Activated naive CD8-positive, alpha-beta T cell treated with anti-CD3 and anti-CD28 coated beads, Interleukin-2, amount 10 ng/mL, durations not matched to agents 7 days and 5 days (primary cell): ENCODE measurements at regions of chr4 and their contacts with region 1.

Region 1: DNA sequence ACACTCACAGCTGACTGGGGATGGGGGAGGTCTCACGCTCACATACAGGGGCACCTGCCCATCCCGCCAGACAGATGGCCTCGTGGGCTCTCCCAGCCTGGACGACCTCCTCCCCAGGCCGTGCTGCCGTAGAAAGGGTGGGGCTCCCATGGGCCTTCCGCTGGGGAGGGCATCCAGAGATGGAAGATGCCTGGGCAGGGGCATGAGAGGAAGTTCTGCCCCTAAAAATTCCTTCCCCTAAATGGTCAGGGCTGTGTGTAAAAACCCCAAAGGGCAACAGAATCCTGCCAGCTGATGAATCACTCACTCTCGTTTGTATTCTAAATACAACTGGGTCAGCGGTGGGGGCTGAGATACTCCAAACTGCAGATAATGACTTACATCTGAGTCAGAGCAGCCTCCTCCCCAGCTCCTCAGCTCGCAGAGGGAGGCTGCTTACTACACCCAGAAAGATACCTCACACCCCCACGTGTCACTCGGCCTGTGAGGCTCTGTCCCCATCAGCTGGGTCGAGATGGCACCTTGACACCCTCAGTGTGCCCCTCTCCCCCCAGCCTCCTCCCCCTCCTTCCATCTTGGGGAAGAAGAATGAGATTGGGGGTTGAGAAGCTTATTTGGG is 10.1 kb downstream of the WDR1 start:
- DNase-seq: no peak
- ATAC-seq: peak; percentile 69
- H3K4me3 Mint-ChIP-seq: peak overlapping the region; percentile 51
- H3K27ac Mint-ChIP-seq: peak overlapping the region; percentile 79
- H3K4me1 Mint-ChIP-seq: peaks cover 90% of the 10 kb centered on the region
- H3K27me3 Mint-ChIP-seq: no peaks in the 10 kb centered on the region

Region 2: GRCh38 chr4:10077483-10078335 is 28.8 kb before region 1 on chr4:
- POLR2A ChIA-PET with region 1: no interaction called
- DNase-seq: peak; percentile 26
- ATAC-seq: no peak
- H3K4me3 Mint-ChIP-seq: no peak overlapping the region
- H3K27ac Mint-ChIP-seq: no peak overlapping the region
- H3K4me1 Mint-ChIP-seq: no peaks in the 10 kb centered on the region
- H3K27me3 Mint-ChIP-seq: no peaks in the 10 kb centered on the region

Region 3: DNA sequence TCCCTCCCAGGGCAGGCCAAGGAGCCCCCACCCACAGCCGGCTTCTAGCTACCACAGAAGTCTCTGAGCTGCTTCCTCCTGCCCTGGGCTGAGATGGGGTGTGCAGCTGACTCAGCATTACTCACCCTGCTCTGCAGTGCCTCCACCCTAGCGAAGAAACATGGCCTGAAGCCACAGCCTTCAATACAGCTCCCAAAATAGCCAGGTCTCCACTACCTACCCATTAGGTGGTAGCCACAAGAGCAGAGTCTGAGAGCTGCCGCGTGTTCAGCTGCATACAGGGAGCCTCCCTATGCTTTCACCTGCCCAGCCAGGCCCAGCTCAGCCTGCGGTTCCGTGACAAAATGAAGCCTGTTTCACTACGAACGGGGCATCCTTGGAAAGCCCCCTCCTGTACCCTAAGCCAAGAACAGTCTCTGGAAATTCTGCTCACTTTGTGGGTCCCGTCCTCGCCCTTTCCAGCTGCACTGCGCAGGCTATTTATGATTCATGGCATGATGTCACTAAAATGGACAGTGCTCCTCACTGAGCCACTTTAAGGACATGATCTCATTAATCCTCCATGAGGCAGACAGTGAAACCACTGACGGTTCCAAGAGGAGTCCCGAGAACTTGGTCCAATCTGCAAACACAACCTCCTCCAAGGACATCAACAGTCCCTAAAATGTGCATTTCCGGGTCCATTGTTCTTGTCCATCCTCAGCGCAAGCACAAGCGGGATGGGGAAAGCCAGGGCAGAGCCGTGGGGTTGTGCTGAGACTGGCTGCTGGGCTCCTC is 10.1 kb before region 1 on chr4:
- POLR2A ChIA-PET with region 1: interaction called, 40 read pairs
- DNase-seq: peak; percentile 71
- ATAC-seq: peak; percentile 83
- H3K4me3 Mint-ChIP-seq: peak overlapping the region; percentile 68
- H3K27ac Mint-ChIP-seq: peak overlapping the region; percentile 91
- H3K4me1 Mint-ChIP-seq: peaks cover 84% of the 10 kb centered on the region
- H3K27me3 Mint-ChIP-seq: no peaks in the 10 kb centered on the region

Region 4: DNA sequence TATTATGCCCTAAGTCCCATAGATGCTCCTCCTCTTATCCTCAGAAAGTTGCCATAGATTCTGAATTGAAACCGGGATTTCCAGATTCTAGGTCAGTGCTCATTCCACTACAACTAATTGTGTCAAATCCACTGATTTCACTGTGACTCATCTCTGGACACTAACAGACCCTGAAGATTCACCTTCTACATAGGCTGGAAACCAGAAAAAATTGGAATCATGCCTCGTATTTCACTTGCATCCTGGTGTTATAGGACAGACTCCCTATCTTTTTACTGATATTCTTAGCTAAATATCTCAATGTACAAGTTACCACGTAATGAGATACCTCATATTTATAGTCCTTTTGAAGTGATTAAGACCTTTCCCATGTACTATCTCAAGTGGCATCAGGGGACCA is 541.3 kb after region 1 on chr4:
- POLR2A ChIA-PET with region 1: no interaction called
- DNase-seq: no peak
- ATAC-seq: no peak
- H3K4me3 Mint-ChIP-seq: no peak overlapping the region
- H3K27ac Mint-ChIP-seq: no peak overlapping the region
- H3K4me1 Mint-ChIP-seq: no peaks in the 10 kb centered on the region
- H3K27me3 Mint-ChIP-seq: no peaks in the 10 kb centered on the region